Uterus (tissue), 4 donors: ENCODE measurements at regions of chr6 and their contacts with region 1.

Region 1: DNA sequence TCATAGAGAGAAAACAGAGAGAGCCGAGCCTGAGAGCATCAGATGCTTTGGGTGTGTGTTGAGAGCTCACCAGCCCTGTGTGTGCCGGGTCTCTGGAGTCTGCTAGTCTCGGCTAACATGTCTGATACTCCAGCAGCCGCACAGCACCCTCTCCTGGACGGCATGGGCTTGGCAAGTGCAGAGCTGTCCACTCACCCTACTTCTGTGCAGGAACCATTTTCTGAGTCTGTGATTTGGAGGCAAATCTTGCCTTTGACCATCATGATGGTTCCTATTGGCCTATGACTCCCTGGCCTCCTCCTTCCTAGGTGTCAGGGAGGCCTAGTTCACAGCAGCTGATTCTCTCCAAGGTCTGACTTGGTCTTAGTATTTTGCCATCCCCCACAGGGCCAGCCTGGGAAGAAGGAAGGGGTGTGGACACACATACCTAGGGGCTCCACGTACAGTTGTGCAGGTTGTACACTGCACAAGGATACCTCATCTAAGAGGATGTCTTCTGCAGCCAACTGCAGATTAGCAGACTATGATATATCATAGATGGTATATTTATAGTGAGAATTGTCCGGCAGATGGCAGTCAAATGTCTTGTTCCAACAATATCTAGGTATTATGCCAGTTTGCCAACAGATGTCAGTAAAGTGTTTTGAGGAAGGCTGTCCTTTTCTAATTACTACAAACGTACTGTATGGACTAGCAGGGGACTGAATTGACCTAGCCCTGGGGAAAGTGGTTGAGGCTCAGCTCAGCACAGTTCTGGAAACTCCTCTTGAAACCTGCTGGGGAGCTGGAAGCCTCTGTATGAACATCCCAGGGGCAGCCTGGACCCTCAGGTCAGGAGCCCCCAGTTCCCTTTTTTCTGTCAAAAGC is 13.0 kb downstream of the FGD2 start:
- DNase-seq: peak; percentile 90
- H3K4me3 ChIP-seq: no peak overlapping the region
- H3K27ac ChIP-seq: peak overlapping the region; percentile 14 to 46
- H3K4me1 ChIP-seq: no peaks in the 10 kb centered on the region
- H3K27me3 ChIP-seq: no peaks in the 10 kb centered on the region
- CTCF ChIP-seq: peak; percentile 82 to 90 (median 85)
- POLR2A ChIP-seq: peak in 1 of 2 donors; percentile 19

Region 2: DNA sequence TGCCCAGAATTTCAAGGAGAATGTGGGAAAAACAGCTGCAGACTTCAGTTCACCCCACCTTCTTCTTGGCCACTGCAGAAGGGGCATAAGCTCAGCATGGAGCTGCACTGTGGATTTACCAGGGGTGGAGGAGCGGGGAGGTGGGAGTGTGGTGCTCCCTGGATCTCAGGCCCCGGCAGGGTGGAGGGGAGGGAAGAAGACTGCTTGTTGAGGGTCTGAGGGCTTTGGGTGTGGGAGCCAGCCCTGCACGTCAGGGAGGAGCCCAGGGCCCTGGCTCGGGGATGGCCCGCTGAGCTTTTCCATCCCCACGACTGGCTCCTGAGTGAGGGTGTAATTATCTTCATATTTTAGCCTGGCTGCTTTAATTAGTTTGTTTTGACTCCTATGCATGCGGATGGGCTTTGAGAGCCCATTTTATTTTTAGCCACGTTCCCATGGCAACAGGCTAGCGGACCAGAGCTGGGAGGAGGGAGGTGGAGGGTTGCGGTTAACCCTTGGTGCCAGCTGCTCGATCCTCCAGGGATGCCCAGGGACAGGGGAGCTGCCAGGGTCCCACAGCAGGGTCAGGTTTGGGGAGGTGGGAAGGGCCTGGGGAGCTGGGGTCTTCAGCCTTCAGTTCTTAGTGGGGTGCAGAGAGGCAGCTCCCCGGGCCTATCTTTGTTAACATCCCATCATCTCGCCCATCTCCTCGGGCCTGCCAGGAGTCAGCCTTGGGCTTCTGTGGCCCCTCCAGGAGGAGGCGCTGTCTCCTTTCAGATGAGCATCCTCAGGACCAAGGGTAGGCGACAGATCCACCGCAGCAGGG is 252.6 kb before region 1 on chr6:
- intact Hi-C with region 1: loop called (anchors 10 kb)
- DNase-seq: peak; percentile 81 to 88
- H3K4me3 ChIP-seq: no peak overlapping the region
- H3K27ac ChIP-seq: peak overlapping the region; percentile 25 to 38
- H3K4me1 ChIP-seq: peaks cover 4 to 11% of the 10 kb centered on the region in 2 donors
- H3K27me3 ChIP-seq: no peaks in the 10 kb centered on the region
- CTCF ChIP-seq: peak; percentile 79 to 96 (median 90)
- POLR2A ChIP-seq: no peak

Region 3: DNA sequence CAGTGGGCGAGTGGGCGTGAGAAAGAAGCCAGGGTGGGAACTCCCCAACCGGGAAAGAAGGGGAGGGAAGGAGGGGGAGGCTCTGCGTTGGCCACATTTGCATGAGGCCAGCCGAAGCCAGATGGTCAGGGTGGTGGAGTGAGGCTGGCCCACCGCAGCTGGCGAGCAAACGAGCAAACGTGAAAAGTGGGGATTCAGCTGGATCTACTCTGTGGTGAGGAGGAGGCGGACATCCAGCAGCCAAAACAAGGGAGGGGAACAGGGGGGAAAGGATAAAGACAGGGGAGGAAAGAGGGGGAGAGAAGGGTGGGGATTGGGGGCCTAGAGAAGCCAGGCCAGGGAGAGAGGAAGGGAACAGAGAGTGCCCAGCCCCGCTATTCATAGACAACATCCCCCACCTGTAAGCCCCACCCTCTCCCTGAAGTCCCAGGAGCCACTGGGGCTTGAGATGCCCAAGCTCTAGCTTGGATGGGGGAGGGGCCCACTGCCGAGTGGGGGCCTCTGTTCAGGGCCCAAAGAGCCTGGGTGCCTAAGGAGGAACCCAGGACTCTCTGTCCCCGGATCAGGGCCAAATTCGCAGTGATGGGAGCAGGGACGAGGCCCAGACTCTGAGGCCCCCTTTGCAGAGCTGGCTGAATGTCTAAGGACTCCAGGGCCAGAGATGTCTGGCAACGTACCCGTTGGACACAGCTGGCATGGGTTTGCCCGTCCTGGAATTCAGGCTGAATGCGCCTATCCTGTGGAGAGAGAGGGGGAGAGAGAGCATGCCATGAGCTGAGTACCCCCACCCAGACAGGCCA is 224.3 kb before region 1 on chr6:
- intact Hi-C with region 1: no loop called
- DNase-seq: peak; percentile 43 to 77
- H3K4me3 ChIP-seq: no peak overlapping the region
- H3K27ac ChIP-seq: peak overlapping the region; percentile 24 to 49
- H3K4me1 ChIP-seq: peaks cover 0 to 3% of the 10 kb centered on the region in 2 donors
- H3K27me3 ChIP-seq: no peaks in the 10 kb centered on the region
- CTCF ChIP-seq: no peak
- POLR2A ChIP-seq: no peak

Region 4: GRCh38 chr6:36885461-36886401 is 132.7 kb before region 1 on chr6 and contains the start of gene C6orf89:
- intact Hi-C with region 1: loop called (anchors 10 kb)
- DNase-seq: peak; percentile 96 to 99
- H3K4me3 ChIP-seq: peak within 1 kb of the TSS; percentile 58 to 92
- H3K27ac ChIP-seq: peak within 1 kb of the TSS; percentile 91 to 92
- H3K4me1 ChIP-seq: peaks cover 6 to 7% of the 10 kb centered on the region in 2 donors
- H3K27me3 ChIP-seq: no peaks in the 10 kb centered on the region
- CTCF ChIP-seq: peak; percentile 88 to 97 (median 94)
- POLR2A ChIP-seq: peak; percentile 44 to 76
- total RNA-seq, gene C6orf89: 21.3 to 67.9 (median 42.6) TPM